ENCODE measurements at regions of chr11 and their contacts with region 1.

Region 1: GRCh38 chr11:126891556-126892217 is 108.9 kb downstream of the KIRREL3 start:
- DNase-seq: no peak
- H3K4me3 ChIP-seq: no peak overlapping the region
- CTCF ChIP-seq: no peak

Region 2: DNA sequence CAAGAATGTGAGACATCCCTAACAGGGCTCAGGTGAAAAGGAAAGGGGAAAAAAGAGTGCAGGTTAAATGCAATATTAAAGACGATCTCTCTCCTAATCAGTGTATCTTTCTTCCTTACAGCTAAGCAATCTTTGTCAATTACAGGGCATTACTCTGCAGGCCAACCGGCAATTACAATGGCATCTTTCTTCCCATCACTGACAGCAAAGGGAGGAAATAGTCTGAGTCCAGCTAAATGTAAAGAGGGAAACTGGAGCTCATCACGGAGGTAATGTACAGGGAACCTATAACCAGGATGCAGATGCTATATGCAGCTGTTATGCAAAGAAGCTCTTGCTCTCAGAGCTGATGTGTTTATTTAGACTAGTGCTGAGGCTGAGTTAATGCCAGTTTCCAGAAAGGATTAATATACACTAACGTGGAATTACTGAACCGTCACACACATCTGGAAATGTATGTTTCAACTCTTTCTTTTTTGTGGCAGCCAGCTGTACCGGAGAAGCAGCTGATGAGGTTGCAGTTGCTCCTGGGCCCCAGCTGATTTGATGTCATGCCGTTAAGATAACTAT is 12.7 kb before region 1 on chr11:
- CTCF ChIA-PET with region 1: interaction called, 16 read pairs
- POLR2A ChIA-PET with region 1: no interaction called
- DNase-seq: no peak
- H3K4me3 ChIP-seq: no peak overlapping the region
- CTCF ChIP-seq: no peak

Measured in AG04449 (cell line).